ENCODE measurements at regions of chr9 and their contacts with region 1.

Region 1: GRCh38 chr9:2620919-2621679 is 488 bp upstream of the VLDLR start:
- DNase-seq: peak; percentile 17
- ATAC-seq: peak; percentile 52
- H3K4me3 Mint-ChIP-seq: peak overlapping the region; percentile 85
- H3K27ac Mint-ChIP-seq: peak overlapping the region; percentile 6
- H3K4me1 Mint-ChIP-seq: peaks cover 16% of the 10 kb centered on the region
- H3K27me3 Mint-ChIP-seq: peaks cover 52% of the 10 kb centered on the region
- CTCF ChIP-seq: no peak

Region 2: DNA sequence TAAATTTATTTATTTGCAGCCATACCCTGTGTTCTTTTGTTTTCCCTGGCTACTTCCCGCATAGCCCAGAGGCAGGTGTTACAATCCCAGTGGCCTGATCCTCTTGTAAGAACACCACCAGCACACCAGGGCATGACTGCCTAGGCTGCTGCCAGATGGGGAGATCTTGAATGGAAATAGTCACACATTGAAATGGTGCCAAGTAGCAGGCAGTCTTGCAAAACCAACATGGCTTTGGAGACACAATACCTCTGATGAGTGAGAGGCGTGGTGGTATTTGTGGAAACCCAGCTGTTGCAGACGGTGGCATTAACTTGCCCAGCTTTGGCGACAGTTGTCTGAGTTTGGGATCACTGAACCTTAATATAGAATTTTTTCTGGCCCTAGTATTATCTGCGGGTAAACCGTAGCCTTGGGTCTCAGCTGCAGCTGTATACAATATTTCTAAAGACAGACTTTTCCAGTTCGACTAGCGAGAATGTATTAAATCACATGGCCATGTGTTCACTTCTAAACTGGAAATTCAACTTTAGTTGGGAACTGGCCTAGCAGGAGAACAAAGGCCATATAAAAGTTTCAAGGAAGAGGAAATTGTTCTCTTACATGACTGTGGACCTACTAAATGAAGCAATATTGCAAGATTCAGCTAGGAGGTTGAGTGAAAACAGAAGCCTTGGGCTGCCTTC is 329.0 kb before region 1 on chr9:
- CTCF ChIA-PET with region 1: no interaction called
- POLR2A ChIA-PET with region 1: no interaction called
- intact Hi-C with region 1: no loop called
- DNase-seq: no peak
- ATAC-seq: no peak
- H3K4me3 Mint-ChIP-seq: no peak overlapping the region
- H3K27ac Mint-ChIP-seq: no peak overlapping the region
- H3K4me1 Mint-ChIP-seq: no peaks in the 10 kb centered on the region
- H3K27me3 Mint-ChIP-seq: peaks cover 3% of the 10 kb centered on the region
- CTCF ChIP-seq: no peak

Region 3: DNA sequence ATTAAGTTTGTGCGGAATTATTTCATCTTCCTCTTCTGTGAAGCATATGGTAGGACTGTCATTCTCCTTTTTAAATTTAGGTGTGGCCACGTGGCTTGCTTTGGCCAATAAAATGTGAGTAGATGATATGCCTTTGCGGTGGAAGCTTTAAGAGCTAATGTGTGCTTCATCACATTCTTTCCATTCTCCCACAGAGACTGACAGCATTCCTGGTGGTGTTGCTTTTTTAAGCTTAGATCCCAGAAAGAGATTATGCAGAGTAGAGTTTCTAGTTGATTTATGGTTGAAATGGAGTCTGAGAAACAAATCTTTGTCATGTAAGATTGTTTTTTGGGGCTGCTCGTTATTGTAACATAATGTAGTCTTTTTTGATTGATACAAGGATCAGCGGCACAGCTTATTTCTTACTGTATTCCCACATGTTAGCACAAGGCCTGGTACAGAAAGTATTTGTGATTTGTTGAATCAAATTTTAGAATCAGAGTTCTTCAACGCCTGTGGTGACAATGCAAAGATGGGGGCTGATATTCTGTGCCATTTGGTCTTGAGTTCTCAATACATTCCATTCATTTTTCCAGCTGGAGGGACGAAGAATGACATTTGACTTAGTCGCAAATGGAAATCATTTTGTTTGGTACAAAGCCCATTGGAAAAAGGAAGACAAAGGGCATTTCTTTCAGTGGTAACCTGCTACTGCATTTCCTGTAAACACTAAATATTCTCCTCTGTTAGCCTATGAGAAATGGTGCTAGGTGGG is 209.5 kb before region 1 on chr9:
- CTCF ChIA-PET with region 1: no interaction called
- POLR2A ChIA-PET with region 1: no interaction called
- intact Hi-C with region 1: no loop called
- DNase-seq: no peak
- ATAC-seq: no peak
- H3K4me3 Mint-ChIP-seq: no peak overlapping the region
- H3K27ac Mint-ChIP-seq: no peak overlapping the region
- H3K4me1 Mint-ChIP-seq: no peaks in the 10 kb centered on the region
- H3K27me3 Mint-ChIP-seq: no peaks in the 10 kb centered on the region
- CTCF ChIP-seq: no peak

Region 4: GRCh38 chr9:2655411-2655901 is 34.4 kb after region 1 on chr9:
- CTCF ChIA-PET with region 1: no interaction called
- POLR2A ChIA-PET with region 1: no interaction called
- intact Hi-C with region 1: loop called (anchors 5 kb)
- DNase-seq: no peak
- ATAC-seq: no peak
- H3K4me3 Mint-ChIP-seq: no peak overlapping the region
- H3K27ac Mint-ChIP-seq: no peak overlapping the region
- H3K4me1 Mint-ChIP-seq: peaks cover 10% of the 10 kb centered on the region
- H3K27me3 Mint-ChIP-seq: peaks cover 18% of the 10 kb centered on the region
- CTCF ChIP-seq: no peak

Region 5: DNA sequence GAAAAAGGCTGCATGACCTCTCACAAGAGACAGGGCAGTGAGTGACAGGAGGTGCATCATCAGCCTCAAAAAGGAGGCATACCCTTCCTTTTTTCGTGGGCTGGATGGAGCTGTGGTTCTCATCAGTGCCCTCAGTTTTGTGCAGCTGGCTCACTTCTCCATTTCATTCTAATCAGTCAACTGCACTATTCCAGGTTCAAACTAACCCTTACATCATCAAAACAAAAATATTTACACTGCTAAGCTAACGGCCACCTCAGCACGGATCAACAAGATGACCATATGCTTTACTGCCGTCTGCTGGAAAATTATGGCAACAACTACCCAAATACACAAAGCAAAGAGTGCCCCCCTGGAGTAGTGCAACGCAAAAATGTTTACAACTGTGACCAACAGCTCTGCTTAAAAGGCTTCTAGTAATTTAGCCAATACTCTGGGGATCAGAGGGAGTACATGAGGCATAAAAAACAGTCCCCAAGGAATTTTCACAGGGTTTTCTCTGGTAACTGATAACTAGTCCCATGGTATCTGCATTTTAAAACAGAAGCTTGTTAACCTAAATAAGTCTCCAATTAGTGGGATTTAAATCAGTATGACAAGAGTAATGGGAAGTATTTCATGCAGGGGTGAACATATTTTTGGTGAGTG is 107.0 kb after region 1 on chr9:
- CTCF ChIA-PET with region 1: no interaction called
- POLR2A ChIA-PET with region 1: no interaction called
- intact Hi-C with region 1: loop called (anchors 10 kb)
- DNase-seq: no peak
- ATAC-seq: peak; percentile 47
- H3K4me3 Mint-ChIP-seq: no peak overlapping the region
- H3K27ac Mint-ChIP-seq: no peak overlapping the region
- H3K4me1 Mint-ChIP-seq: peaks cover 10% of the 10 kb centered on the region
- H3K27me3 Mint-ChIP-seq: no peaks in the 10 kb centered on the region
- CTCF ChIP-seq: no peak

Measured in activated B cell treated with CpG ODN at 0.5 μM for 24 hours (primary cell).